ENCODE measurements at regions of chr19 and their contacts with region 1.

Region 1: DNA sequence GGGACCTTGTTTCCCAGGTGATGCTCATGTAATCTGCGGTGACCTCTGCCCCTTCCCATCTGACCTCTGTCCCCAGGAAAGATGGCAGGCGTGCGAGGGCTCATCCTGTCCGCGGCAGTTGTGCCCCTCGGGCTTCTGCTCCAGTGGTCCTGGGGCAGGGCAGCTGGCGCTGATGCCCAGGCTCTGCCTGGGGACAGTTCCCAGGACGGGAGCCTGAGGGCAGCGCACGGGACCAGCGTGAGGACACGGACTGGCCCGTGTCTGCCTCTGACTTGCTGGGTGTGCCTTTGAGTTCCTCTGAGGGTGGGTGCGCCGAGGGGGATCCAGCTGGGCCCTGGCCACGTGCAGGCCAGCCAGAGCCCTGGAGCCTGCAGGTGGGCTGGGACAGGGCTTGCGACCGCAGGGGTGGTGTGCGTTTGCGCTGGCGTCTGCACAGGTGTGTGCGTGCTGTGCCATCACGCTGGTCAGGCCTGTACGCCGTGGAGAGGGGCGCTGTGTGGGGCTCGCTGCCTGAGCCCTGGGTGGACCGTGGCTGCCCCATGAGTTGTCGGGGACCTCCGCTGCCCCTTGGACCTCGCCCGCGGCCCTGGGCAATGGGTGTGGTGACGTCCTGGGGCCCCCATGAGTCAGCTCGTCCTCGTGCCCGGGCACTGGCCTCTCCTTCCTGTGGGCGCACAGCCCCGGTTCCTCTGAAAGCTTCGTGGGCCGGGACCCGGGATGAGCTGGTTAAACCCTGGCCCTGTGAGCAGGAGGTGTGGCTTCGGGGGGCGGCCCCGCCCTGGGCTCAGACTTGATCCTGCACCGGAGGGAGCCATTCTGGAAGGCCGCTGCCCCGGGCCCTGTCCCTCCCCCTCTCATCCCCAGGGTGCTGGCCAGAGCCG is 6.6 kb downstream of the CSNK1G2 start:
- DNase-seq: no peak
- H3K4me3 ChIP-seq: no peak overlapping the region
- H3K27ac ChIP-seq: no peak overlapping the region
- H3K4me1 ChIP-seq: peaks cover 4 to 30% (median 16%) of the 10 kb centered on the region in 4 donors
- H3K27me3 ChIP-seq: no peaks in the 10 kb centered on the region
- CTCF ChIP-seq: no peak

Region 2: DNA sequence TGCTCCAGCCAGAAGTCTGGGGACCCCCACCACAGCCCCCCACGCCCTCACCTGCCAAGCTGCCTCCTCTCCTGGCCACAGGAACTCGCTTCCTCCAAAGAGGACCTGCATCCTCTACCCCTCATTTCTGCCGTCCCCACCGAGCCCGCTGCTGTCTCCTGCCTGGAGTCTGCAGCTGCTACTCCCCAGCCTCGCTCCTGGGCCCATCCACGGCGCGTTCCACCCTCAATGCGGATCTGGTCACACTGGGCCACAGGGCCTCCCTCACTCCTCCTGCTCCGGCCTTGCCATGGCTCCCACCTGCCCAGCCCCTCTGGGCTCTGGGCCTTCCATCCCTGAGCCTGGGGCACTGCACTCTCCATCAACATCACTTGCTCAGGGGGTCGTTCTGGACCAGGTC is 63.6 kb after region 1 on chr19:
- intact Hi-C with region 1: loop called (anchors 1 kb)
- DNase-seq: no peak
- H3K4me3 ChIP-seq: no peak overlapping the region
- H3K27ac ChIP-seq: no peak overlapping the region
- H3K4me1 ChIP-seq: peaks cover 1 to 22% (median 15%) of the 10 kb centered on the region in 4 donors
- H3K27me3 ChIP-seq: no peaks in the 10 kb centered on the region
- CTCF ChIP-seq: no peak